ENCODE measurements at regions of chr2 and their contacts with region 1.

Region 1: GRCh38 chr2:113233593-113234550 is 44.8 kb downstream of the PAX8 start:
- DNase-seq: no peak
- H3K4me3 ChIP-seq: no peak overlapping the region
- CTCF ChIP-seq: peak; percentile 34

Region 2: GRCh38 chr2:113126845-113127645 is 106.8 kb before region 1 on chr2 and contains the start of gene IL1RN:
- in situ Hi-C with region 1: no loop called
- DNase-seq: no peak
- H3K4me3 ChIP-seq: no peak within 1 kb of the TSS
- CTCF ChIP-seq: no peak

Region 3: DNA sequence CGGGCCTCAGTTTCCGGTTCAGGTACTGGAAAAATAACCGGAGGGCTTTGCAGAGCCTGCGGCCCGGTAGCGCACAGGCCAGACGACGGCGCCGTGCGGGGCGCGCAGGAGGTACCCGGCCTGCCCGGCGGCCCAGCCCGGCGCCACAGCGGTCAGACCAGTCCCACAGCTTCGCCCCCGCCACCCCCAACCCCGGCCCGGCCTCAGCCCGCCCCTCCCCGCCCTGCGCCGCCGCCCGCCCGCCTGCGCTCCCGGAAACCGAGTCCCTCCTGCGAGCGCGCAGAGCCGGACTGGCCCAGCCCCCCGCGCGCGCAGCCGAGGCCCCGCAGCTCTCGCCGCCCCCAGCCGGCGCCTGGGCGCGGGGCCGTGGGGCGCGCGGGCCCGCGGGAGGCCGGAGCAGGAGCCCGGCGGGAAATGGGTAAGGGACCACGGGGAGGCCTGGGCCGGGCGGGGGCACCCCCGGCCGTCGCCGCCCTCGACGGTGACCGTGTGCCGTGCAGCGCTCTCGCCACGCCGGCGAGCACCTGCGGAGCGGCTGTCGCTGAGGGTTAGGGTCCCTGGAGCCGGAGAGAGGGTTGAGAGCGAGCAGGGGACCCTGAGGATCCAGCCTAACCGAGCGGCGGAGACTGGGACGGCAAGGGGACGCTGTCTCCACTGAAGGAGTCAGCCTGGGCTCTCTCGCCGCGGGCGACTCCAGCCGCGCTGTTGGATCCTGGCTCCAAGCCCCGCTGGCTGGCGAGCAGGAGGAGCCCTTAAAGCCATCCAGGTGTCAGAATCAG is 76.6 kb before region 1 on chr2:
- in situ Hi-C with region 1: loop called (anchors 5 kb)
- DNase-seq: no peak
- H3K4me3 ChIP-seq: peak overlapping the region; percentile 49
- CTCF ChIP-seq: no peak

Region 4: DNA sequence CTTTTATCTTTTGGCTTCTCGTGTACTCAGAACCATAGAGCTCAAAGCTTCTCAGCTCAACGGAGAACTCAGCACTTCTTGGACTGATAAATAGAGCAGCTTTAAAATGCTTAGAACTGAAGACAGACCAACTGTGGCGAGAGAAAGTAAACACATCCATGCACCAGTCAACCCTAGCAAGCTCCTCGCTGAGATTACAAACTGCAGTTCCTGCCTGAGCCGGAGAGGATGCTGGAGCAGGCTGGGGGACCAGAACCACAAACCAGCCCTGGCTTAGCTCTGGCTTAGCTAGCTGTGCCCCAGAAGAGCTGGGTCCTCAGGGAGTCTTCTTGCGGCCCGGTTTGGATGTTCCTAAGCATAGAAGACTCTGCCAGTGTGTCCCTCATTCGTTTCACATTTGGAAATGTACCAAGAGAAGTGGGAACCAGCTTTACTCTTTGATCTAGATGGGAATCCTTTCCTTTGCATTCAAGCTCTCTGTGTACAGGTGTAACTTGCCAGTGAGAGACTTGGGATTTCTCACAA is 39.2 kb after region 1 on chr2:
- in situ Hi-C with region 1: loop called (anchors 5 kb)
- DNase-seq: no peak
- H3K4me3 ChIP-seq: no peak overlapping the region
- CTCF ChIP-seq: peak; percentile 62